GM12878 (cell line): ENCODE measurements at regions of chr3 and their contacts with region 1.

Region 1: DNA sequence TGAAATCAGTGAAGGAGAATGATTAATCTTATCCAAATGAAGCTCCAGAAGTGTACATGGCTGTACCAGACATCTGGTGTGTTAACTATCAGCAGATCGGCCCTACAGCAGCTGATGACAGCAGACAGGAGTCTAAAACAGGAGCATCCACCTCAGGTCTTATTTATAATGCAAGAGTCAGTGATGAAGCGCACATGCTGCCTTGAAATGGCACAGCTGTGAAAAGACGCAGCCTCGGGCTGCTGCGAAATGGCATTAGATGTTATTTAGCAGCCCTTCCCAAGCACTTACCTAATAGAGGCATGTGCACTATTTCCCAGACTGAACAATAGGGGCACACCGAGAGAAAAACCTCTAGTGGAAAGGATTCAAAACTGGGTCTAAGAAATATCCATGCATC is 472.3 kb upstream of the CBLB start:
- DNase-seq: no peak
- ATAC-seq: no peak
- H3K4me3 ChIP-seq: no peak overlapping the region
- H3K27ac ChIP-seq: no peak overlapping the region
- H3K4me1 ChIP-seq: no peaks in the 10 kb centered on the region
- H3K27me3 ChIP-seq: no peaks in the 10 kb centered on the region
- CTCF ChIP-seq: no peak
- EP300 ChIP-seq: no peak
- POLR2A ChIP-seq: no peak
- RAD21 ChIP-seq: no peak

Region 2: DNA sequence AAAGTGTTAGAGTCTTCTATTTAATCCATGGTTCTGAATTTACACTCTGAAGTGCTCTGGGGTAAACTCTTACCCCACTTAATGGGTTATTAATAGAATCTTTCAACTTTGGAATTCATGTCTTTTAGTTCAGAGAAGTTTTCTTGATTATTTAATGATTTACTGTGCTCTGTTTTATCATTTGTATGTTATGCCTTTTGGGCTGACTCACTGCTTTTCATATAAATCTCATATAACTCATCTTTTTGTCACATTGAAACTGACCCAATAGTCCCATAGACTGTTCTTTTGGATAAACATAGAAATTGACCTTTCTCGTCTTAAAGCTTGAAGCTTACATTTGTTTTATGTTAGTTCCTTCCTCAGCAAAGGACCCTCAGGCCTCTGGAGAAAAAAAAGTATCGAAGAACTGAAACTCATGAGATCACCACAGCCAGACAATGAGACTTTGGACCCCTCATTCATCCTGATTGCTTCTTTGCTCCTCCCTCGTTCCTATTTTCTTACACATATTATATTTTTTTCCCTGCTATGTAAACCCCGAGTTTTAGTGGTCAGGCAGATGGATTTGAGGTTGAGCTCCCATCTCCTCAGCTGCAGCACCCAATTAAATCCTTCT is 243.2 kb before region 1 on chr3:
- CTCF ChIA-PET with region 1: no interaction called
- POLR2A ChIA-PET with region 1: no interaction called
- RAD21 ChIA-PET with region 1: no interaction called
- SMC1A ChIA-PET with region 1: no interaction called
- in situ Hi-C with region 1: no loop called
- intact Hi-C with region 1: no loop called
- DNase-seq: no peak
- ATAC-seq: no peak
- H3K4me3 ChIP-seq: no peak overlapping the region
- H3K27ac ChIP-seq: no peak overlapping the region
- H3K4me1 ChIP-seq: no peaks in the 10 kb centered on the region
- H3K27me3 ChIP-seq: no peaks in the 10 kb centered on the region
- CTCF ChIP-seq: no peak
- EP300 ChIP-seq: no peak
- POLR2A ChIP-seq: no peak
- RAD21 ChIP-seq: no peak

Region 3: DNA sequence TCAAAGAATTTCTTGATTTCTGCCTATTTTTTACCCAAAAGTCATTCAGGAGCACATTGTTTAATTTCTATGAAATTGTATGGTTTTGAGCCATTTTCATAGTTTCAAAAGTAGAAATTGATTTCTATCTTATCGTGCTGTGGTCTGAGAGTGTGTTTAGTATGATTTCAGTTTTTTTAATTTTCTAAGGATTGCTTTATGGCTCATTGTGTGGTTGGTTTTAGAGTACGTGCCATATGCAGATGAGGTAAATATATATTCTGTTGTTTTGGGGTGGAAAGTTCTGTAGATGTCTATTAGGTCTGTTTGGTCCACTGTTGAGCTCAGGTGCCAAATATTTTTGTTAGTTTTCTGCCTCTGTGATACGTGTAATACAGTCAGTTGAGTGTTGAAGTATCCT is 14.8 kb after region 1 on chr3:
- CTCF ChIA-PET with region 1: no interaction called
- POLR2A ChIA-PET with region 1: interaction called, 3 read pairs
- RAD21 ChIA-PET with region 1: no interaction called
- SMC1A ChIA-PET with region 1: interaction called, 3 read pairs
- in situ Hi-C with region 1: no loop called
- intact Hi-C with region 1: loop called (anchors 2 kb)
- DNase-seq: no peak
- ATAC-seq: no peak
- H3K4me3 ChIP-seq: no peak overlapping the region
- H3K27ac ChIP-seq: no peak overlapping the region
- H3K4me1 ChIP-seq: no peaks in the 10 kb centered on the region
- H3K27me3 ChIP-seq: no peaks in the 10 kb centered on the region
- CTCF ChIP-seq: no peak
- EP300 ChIP-seq: no peak
- POLR2A ChIP-seq: no peak
- RAD21 ChIP-seq: no peak